Transverse colon (tissue), 4 donors: ENCODE measurements at regions of chr1 and their contacts with region 1.

Region 1: DNA sequence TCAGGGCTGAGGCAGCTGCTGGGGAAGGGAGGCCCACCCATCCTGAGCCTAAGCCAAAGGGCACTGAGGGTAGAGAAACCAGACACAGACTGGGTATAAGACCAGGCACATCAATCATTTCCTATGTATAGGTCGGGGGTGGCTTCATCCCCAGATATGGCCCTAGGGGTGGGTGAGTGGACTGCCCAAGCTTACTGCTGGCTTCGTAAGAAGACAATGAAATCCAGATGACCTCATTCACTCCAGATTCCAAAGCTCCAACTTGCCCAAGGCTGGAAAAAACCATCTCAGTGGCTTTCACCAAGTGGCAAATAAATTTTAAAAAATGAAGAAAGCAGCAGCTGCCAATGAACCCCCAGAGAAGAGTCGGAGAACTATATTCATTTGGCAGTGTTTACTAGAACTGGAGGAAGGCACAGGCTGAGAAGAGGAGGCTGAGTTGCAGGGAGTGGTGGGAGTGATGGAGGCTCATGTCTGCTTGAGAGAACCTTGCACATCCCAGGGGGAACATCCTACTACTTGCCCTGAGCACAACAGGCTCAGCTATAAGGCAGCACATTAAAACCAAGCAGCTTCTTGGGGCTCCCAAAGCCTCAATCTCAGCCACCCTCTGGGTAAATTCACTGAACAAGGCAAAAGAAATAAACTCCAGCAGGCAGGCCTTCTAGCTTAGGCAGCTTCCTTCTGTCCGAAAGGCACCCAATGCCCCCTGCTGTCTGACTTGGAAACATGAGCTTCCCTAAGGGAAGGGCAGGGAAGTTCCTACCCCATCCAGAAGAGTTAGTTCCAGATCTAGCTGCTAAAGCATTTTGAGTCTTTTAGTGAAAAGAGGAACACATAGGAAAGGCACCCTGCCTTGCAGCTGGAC is 14.1 kb downstream of the PEA15 start:
- DNase-seq: peak; percentile 52
- H3K4me3 ChIP-seq: no peak overlapping the region
- H3K27ac ChIP-seq: peak overlapping the region; percentile 39 to 80 (median 66)
- H3K4me1 ChIP-seq: peaks cover 17 to 37% (median 25%) of the 10 kb centered on the region in 4 donors
- H3K27me3 ChIP-seq: no peaks in the 10 kb centered on the region
- CTCF ChIP-seq: peak; percentile 49 to 58 (median 56)
- EP300 ChIP-seq: no peak
- POLR2A ChIP-seq: no peak

Region 2: GRCh38 chr1:160098852-160099561 is 120.3 kb before region 1 on chr1:
- in situ Hi-C with region 1: no loop called
- intact Hi-C with region 1: loop called (anchors 1 kb)
- DNase-seq: peak; percentile 99
- H3K4me3 ChIP-seq: peak overlapping the region; percentile 29 to 88 (median 56)
- H3K27ac ChIP-seq: peak overlapping the region; percentile 90 to 97 (median 95)
- H3K4me1 ChIP-seq: peaks cover 33 to 65% (median 48%) of the 10 kb centered on the region in 4 donors
- H3K27me3 ChIP-seq: no peaks in the 10 kb centered on the region
- CTCF ChIP-seq: no peak
- EP300 ChIP-seq: no peak
- POLR2A ChIP-seq: peak; percentile 64